Astrocyte of the cerebellum (primary cell): ENCODE measurements at regions of chr1 and their contacts with region 1.

Region 1: DNA sequence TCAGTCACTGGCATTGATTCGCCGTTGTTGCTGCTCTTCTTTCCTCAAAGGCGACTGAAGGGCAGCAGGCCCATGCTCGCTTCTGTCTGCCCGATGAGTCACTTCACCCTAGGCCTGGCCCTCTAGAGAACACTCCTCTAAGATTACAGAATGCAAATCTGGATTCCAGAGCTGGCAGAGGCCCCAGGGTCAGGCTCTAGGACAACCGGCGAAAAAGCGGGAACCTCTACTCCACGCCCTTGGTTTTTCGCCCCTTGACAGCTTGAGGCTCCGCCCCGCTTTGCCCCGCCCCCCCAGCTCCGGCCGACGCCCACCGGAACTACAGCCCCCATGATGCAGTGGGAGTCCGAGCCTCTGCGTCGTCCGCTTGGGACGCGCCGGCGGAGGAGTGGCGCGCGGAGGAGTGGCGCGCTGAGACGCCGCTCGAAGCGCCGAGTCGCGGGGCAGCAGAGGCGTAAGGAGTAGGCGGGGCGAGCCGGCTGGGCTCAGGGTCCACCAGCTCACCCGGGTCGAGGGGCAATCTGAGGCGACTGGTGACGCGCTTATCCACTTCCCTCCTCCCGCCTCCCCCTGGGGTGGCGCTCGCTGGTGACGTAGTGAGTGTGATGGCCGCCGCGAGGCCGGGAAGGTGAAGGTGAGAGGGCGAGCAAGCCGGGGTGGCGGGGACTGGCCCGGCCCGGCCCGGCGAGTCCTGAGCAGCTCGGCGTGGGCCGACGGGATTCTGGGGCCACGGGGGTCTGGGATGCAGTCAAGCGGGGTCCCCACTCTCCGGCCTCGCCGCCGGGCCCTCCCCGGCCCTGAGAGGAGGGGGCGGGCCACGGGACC is at the start of gene MFN2:
- DNase-seq: peak; percentile 92
- H3K4me3 ChIP-seq: peak within 1 kb of the TSS; percentile 97
- CTCF ChIP-seq: no peak

Region 2: DNA sequence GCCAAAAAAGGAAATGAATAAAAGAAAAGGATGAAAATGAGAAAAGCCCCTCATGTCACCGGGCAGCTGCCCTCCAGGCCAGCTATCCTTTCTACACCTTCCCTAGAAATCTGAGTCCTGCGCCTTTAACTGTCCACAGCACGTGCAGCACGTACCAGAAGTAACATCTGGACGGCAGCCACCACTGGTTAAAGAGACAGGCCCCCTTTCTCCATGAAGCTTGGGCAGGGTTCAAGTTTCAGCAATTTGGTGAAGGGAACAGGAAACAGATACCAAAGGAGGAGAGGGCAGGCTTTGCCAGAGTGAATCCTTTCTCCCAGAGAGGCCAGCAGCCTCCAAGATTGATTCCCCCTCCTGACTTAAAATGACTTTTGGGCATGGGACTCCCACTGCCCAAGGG is 50.2 kb before region 1 on chr1:
- in situ Hi-C with region 1: no loop called
- DNase-seq: no peak
- H3K4me3 ChIP-seq: no peak overlapping the region
- CTCF ChIP-seq: no peak

Region 3: DNA sequence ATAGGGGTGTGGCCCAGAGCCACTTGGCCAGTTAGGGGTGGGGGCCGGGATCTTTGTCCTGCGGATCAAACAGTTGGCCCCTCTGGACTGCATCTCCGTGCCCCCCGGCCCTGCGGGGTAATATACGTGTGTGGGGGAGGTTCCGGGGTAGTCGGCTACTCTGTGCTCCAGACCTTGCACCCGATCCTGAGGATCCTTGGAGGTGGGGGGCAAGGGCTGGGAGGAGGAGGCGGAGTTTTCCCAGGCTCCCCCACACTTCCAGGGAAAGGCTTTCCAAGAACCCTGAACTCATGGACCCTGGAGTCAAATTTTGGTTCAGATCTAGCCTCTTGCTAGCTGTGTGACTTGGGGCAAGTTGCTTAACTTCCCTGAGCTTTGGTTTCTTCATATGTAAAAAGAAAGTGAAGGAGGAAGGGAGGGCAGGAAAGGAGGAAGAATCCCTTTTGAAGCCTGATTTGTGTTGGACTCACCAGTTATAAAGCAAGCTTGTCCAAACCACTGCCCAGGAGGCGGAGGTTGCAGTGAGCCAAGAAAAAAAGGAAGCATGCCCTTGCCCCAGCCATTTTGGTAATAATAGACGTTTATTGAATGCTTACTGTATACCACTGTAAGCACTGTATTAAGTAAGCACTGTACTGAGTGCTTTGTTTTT is 39.9 kb after region 1 on chr1:
- in situ Hi-C with region 1: loop called (anchors 5 kb)
- DNase-seq: no peak
- H3K4me3 ChIP-seq: peak overlapping the region; percentile 76
- CTCF ChIP-seq: no peak

Region 4: DNA sequence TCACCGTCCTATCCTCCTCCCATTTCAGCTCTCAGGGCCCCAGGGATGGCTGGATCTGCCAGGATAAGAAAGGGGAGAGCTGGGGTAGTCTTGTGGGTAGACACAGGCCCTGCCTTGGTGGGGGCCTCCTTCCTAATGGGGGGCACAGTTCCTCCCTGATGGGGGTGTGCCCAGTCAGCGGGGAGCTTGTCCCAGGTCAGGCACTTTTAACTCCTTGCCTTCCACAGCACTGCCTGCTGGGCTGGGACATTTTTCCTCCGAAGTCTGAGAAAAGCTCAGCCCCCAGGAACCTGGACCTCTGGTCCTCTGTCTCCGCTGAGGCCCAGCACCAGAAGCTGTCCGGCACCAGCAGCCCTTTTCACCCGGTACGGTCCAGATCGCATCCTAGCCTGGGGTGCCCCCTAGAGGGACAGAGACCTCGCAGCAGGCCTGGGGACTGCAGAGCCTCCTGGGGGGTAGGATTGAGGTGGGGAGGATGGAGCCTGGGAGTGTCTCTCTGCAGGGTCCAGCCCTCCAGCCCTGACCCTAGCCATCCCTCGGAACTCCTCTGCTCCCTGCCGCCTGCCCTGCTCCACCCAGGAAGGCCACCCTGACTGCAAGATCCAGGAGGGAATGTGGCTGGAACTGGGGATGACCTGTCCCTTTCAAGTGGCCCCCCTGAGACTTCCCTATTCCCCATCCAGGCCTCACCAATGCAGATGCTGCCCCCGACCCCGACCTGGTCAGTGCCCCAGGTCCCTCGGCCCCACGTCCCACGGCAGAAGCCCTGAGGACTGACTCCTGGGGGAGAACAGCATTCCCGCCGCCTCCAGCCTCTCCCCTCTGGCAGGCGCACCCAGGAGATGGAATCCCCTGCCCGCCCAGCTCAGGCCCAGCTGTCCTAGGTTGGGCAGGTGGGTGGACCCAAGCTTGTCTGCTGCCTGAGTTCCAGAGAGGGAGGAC is 51.2 kb after region 1 on chr1:
- in situ Hi-C with region 1: no loop called
- DNase-seq: no peak
- H3K4me3 ChIP-seq: no peak overlapping the region
- CTCF ChIP-seq: peak; percentile 63